Activated naive CD4-positive, alpha-beta T cell treated with anti-CD3 and anti-CD28 coated beads for 36 hours (primary cell): ENCODE measurements at regions of chr6 and their contacts with region 1.

Region 1: GRCh38 chr6:154606457-154606856 is 96.0 kb upstream of the CNKSR3 start:
- DNase-seq: peak; percentile 97
- H3K4me3 Mint-ChIP-seq: peak overlapping the region; percentile 2
- H3K27ac Mint-ChIP-seq: peak overlapping the region; percentile 79
- H3K4me1 Mint-ChIP-seq: peaks cover 40% of the 10 kb centered on the region
- H3K27me3 Mint-ChIP-seq: peaks cover 2% of the 10 kb centered on the region

Region 2: DNA sequence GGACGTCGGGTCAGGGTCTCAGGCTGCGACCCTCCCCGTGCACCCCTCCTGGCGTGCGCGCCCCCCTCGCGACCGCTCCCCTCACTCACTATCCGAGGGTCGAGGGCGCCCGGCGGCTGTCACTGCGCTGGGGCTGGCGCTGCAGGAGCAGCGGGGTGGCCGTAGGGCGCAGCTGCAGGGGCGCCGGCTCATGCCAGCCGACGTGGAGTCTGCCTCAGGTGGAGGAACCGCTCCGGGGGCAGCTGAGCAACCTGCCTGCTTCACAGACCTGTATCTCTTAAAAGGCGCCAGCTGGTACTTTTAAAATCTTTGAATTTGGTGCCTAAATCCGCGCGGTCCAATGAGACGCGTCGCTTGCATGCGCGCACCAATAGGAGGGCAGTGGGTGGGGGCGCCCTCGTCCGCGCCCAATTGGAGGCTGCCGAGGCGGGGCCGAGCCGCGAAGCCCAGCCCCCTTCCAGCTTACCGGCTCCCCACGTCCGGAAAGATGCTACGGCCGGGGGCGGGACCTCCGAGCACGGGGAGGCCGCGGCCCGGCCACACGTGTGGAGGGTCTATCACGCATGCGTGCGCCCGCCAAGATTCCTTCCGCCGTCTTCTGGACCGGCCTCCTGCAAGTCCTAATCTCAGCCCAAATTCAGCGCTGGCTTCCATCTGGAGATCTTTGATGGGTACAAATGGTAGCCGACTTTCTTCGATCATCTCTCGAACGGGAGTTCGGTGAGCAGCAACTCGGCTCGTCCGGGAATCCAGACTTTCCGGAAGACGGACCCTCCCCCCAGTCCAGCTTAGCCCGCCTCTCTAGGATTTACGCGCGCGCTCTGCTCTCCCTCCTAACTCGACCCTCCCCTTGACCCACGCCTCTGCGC is 1623.5 kb before region 1 on chr6 and contains the start of gene FBXO5:
- CTCF ChIA-PET with region 1: no interaction called
- intact Hi-C with region 1: loop called (anchors 2 kb)
- DNase-seq: peak; percentile 97
- H3K4me3 Mint-ChIP-seq: peak within 1 kb of the TSS; percentile 99
- H3K27ac Mint-ChIP-seq: peak within 1 kb of the TSS; percentile 100
- H3K4me1 Mint-ChIP-seq: peaks cover 44% of the 10 kb centered on the region
- H3K27me3 Mint-ChIP-seq: no peaks in the 10 kb centered on the region
- total RNA-seq, gene FBXO5: 61.4 to 62.3 TPM

Region 3: GRCh38 chr6:153927867-153928266 is 678.6 kb before region 1 on chr6:
- CTCF ChIA-PET with region 1: no interaction called
- intact Hi-C with region 1: no loop called
- DNase-seq: no peak
- H3K4me3 Mint-ChIP-seq: no peak overlapping the region
- H3K27ac Mint-ChIP-seq: no peak overlapping the region
- H3K4me1 Mint-ChIP-seq: no peaks in the 10 kb centered on the region
- H3K27me3 Mint-ChIP-seq: peaks cover 2% of the 10 kb centered on the region

Region 4: GRCh38 chr6:154352898-154353585 is 253.4 kb before region 1 on chr6:
- CTCF ChIA-PET with region 1: no interaction called
- intact Hi-C with region 1: loop called (anchors 1 kb)
- DNase-seq: peak; percentile 83
- H3K4me3 Mint-ChIP-seq: no peak overlapping the region
- H3K27ac Mint-ChIP-seq: no peak overlapping the region
- H3K4me1 Mint-ChIP-seq: peaks cover 38% of the 10 kb centered on the region
- H3K27me3 Mint-ChIP-seq: peaks cover 25% of the 10 kb centered on the region

Region 5: DNA sequence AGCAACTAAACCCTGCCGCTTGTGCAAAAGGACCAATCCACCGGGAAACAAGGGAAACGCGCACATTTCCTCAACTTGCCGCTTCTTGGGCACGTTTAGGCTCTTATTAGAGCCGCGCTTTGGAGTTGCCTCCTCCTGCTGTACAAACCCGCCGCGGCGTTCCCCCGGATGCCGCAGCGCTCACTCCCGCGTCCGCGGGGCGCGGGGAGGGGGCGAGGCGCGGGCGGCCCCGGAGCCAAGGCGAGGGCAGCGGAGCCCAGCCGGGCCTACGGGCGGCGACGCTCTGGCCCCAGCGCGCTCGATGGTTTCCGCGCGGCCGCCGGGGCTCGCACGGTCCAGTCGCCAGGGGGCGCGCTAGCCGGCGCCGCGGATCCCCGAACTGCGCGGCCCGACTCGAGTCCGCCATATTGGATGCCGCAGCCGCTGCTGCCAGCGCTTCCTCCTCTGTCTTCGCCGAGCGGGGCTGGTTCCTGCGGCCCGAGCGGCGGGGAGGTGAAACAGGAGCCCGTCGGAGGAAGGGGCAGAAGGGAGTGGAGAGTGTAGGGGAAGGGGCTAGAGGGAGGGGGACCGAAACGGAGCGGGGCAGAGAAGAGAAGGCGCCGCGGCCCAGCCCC is 126.7 kb after region 1 on chr6 and contains the start of gene SCAF8:
- CTCF ChIA-PET with region 1: no interaction called
- intact Hi-C with region 1: loop called (anchors 1 kb)
- DNase-seq: peak; percentile 83
- H3K4me3 Mint-ChIP-seq: peak within 1 kb of the TSS; percentile 85
- H3K27ac Mint-ChIP-seq: peak within 1 kb of the TSS; percentile 93
- H3K4me1 Mint-ChIP-seq: peaks cover 44% of the 10 kb centered on the region
- H3K27me3 Mint-ChIP-seq: no peaks in the 10 kb centered on the region
- total RNA-seq, gene SCAF8: 27.2 to 28.0 TPM

Region 6: GRCh38 chr6:155154158-155154830 is 547.8 kb after region 1 on chr6:
- CTCF ChIA-PET with region 1: no interaction called
- intact Hi-C with region 1: loop called (anchors 5 kb)
- DNase-seq: peak; percentile 42
- H3K4me3 Mint-ChIP-seq: no peak overlapping the region
- H3K27ac Mint-ChIP-seq: peak overlapping the region; percentile 89
- H3K4me1 Mint-ChIP-seq: peaks cover 70% of the 10 kb centered on the region
- H3K27me3 Mint-ChIP-seq: no peaks in the 10 kb centered on the region

Region 7: GRCh38 chr6:155223646-155224451 is 617.4 kb after region 1 on chr6:
- CTCF ChIA-PET with region 1: no interaction called
- intact Hi-C with region 1: loop called (anchors 5 kb)
- DNase-seq: peak; percentile 82
- H3K4me3 Mint-ChIP-seq: no peak overlapping the region
- H3K27ac Mint-ChIP-seq: peak overlapping the region; percentile 74
- H3K4me1 Mint-ChIP-seq: peaks cover 25% of the 10 kb centered on the region
- H3K27me3 Mint-ChIP-seq: peaks cover 18% of the 10 kb centered on the region